ENCODE measurements at regions of chr16 and their contacts with region 1.

Region 1: DNA sequence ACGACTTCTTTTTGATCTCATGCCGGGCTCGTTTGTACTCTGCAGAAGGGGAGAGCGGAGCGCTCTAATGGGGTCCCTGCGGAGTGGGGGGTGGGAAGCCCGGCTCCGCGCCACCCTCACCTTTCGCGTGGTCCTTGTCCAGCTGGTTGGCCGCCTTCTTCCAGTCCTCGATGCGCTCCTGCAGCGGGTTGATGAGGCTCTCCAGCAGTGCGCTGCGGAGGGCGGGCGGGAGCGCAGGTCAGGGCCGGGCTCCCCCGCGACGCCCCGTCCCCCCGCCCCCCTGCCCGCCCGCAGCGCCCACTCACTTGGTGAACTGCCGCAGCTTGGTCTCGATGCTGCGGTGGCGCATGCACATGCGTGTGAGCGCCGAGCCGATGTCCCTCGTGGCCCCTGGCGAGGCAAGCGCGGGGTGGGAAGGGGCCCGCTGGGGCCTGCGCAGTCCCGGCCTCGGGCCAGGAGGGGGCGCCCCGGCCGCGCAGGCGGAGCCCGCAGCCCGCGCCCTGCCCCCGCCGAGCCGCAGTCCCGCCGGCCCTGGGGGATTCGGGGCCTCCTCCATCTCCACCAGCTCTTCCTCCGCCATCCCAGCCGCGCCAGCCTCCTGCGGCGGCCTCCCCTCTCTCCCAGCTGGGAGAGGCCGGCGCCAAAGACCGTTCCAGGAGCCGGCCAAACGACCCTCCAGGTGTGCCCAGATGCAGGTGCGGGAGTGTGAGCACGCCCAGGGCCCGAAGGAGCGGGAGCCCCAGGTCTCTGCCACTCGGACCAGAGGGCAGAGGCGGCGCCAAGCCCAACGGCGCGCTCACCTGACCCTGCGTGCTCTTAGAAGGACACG is 6.0 kb downstream of the MTSS2 start:
- DNase-seq: no peak
- H3K4me3 ChIP-seq: no peak overlapping the region
- H3K27ac ChIP-seq: peak overlapping the region; percentile 92
- H3K4me1 ChIP-seq: peaks cover 47% of the 10 kb centered on the region
- H3K27me3 ChIP-seq: no peaks in the 10 kb centered on the region
- CTCF ChIP-seq: peak in 1 of 3 experiments; percentile 67
- POLR2A ChIP-seq: no peak

Region 2: DNA sequence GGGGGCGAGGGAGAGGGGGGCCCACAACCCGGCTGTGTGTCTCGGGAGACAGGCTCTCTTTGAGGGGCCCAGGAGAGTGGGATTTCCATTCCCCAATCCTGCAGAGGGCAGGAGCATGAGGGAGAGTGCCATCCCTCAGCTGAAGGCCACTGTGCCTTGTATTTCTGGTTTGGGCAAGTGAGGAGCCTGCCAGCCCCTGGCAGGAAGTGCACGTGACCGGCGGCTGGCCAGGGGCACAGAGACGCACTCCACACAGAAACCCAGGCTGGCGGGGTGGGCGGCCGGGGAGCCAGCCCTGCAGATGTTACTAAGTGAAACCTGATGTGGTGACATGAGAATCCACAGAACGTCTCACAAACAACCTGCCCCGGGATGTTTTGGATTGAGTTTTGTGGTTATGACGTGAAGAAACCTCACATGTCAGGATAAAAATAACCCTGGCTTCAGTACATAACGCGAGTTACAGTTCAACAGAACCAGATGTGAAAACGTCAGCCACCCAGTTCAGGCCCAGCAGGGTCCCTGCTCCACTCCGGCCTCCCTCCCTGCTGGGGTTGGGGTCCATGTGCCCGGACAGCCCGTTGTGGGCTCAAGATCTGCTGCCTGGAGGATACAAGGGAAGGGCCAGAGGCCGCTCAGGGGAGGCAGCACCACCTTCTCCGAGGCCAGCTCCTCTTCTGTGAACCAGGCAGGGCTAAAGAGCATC is 57.6 kb after region 1 on chr16:
- intact Hi-C with region 1: loop called (anchors 5 kb)
- DNase-seq: no peak
- H3K4me3 ChIP-seq: peak overlapping the region in 1 of 2 donors; percentile 16
- H3K27ac ChIP-seq: peak overlapping the region; percentile 83
- H3K4me1 ChIP-seq: peaks cover 67% of the 10 kb centered on the region
- H3K27me3 ChIP-seq: no peaks in the 10 kb centered on the region
- CTCF ChIP-seq: no peak
- POLR2A ChIP-seq: no peak

Region 3: GRCh38 chr16:70770626-70771552 is 91.0 kb after region 1 on chr16:
- intact Hi-C with region 1: loop called (anchors 5 kb)
- DNase-seq: no peak
- H3K4me3 ChIP-seq: no peak overlapping the region
- H3K27ac ChIP-seq: no peak overlapping the region
- H3K4me1 ChIP-seq: peaks cover 21% of the 10 kb centered on the region
- H3K27me3 ChIP-seq: no peaks in the 10 kb centered on the region
- CTCF ChIP-seq: peak; percentile 94 to 96 (median 95)
- POLR2A ChIP-seq: no peak

Region 4: DNA sequence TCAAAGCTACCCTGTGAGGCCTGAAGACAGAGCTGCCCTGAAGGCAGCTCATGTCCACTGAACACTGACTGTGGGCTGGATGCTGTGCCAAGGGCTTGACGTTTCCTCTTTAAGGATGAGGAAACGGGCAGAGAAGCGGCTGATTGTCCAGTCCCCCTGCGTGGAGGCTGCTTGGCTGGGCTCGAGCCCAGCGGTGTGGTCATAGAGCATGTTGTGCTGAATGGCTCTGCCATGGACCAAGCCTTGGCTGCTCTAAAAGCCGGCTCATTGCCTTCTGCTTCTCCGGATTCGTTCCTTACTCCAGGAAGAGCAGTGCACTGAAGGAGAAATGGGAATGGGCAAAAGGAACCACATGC is 1345.9 kb after region 1 on chr16:
- intact Hi-C with region 1: no loop called
- DNase-seq: no peak
- H3K4me3 ChIP-seq: no peak overlapping the region
- H3K27ac ChIP-seq: no peak overlapping the region
- H3K4me1 ChIP-seq: no peaks in the 10 kb centered on the region
- H3K27me3 ChIP-seq: no peaks in the 10 kb centered on the region
- CTCF ChIP-seq: no peak
- POLR2A ChIP-seq: no peak